GM12878 (cell line): ENCODE measurements at regions of chr4 and their contacts with region 1.

Region 1: GRCh38 chr4:41661442-41662076 is 87.0 kb downstream of the PHOX2B start:
- DNase-seq: no peak
- ATAC-seq: peak; percentile 84
- H3K4me3 ChIP-seq: no peak overlapping the region
- H3K27ac ChIP-seq: no peak overlapping the region
- H3K4me1 ChIP-seq: no peaks in the 10 kb centered on the region
- H3K27me3 ChIP-seq: peaks cover 0 to 2% of the 10 kb centered on the region in 2 experiments; a peak in 1 of 4 replicates
- CTCF ChIP-seq: peak; percentile 83 to 92 (median 89)
- EP300 ChIP-seq: no peak
- POLR2A ChIP-seq: no peak
- RAD21 ChIP-seq: peak; percentile 79

Region 2: GRCh38 chr4:40908702-40909362 is 752.7 kb before region 1 on chr4:
- CTCF ChIA-PET with region 1: interaction called, 5 read pairs
- POLR2A ChIA-PET with region 1: no interaction called
- RAD21 ChIA-PET with region 1: no interaction called
- SMC1A ChIA-PET with region 1: no interaction called
- in situ Hi-C with region 1: loop called (anchors 25 kb)
- intact Hi-C with region 1: no loop called
- DNase-seq: peak; percentile 40
- ATAC-seq: peak; percentile 99
- H3K4me3 ChIP-seq: no peak overlapping the region
- H3K27ac ChIP-seq: no peak overlapping the region
- H3K4me1 ChIP-seq: peaks cover 4% of the 10 kb centered on the region; the same call in 1 of the 2 replicates
- H3K27me3 ChIP-seq: no peaks in the 10 kb centered on the region
- CTCF ChIP-seq: peak; percentile 92 to 97 (median 93)
- EP300 ChIP-seq: no peak
- POLR2A ChIP-seq: no peak
- RAD21 ChIP-seq: peak; percentile 82

Region 3: DNA sequence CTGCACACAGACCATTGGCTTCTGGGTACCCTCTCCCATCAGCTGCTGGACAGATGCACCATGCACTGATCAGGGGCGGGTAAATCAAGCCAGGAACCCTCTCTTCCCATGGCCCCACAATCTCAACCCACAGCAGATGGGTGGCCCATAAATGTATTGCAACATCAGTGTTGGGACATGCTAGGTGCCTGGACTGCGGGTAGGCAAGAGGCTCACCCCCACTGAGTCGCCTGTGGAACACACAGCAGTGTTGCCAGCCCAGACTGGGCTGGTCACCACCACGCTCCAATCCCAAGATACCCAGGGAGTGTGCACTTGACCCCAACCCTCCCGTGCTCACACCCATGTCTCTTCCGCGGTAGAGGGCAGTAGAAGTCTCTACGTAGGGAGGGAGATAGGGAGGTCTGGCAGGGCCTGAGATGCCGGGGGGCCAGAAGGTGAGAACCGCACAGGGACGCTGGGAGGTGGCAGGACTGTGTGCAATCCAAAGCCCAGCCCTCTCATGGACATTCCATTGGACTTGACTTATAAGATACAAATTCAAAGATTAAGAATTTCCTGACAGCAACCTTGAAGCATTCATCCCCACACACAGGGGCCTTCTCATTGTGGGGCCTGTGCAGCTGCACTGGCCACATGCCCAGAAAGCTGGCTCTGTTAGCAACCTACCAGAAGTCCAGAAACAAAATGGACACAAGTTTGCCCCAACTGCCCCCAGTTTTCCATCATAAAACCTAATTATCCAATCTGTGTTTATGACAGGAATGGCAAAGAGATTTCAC is 728.1 kb before region 1 on chr4:
- CTCF ChIA-PET with region 1: no interaction called
- POLR2A ChIA-PET with region 1: no interaction called
- RAD21 ChIA-PET with region 1: no interaction called
- SMC1A ChIA-PET with region 1: no interaction called
- in situ Hi-C with region 1: no loop called
- intact Hi-C with region 1: loop called (anchors 10 kb)
- DNase-seq: no peak
- ATAC-seq: no peak
- H3K4me3 ChIP-seq: no peak overlapping the region
- H3K27ac ChIP-seq: no peak overlapping the region
- H3K4me1 ChIP-seq: no peaks in the 10 kb centered on the region
- H3K27me3 ChIP-seq: no peaks in the 10 kb centered on the region; a peak in 1 of 4 replicates
- CTCF ChIP-seq: no peak
- EP300 ChIP-seq: no peak
- POLR2A ChIP-seq: no peak
- RAD21 ChIP-seq: no peak

Region 4: DNA sequence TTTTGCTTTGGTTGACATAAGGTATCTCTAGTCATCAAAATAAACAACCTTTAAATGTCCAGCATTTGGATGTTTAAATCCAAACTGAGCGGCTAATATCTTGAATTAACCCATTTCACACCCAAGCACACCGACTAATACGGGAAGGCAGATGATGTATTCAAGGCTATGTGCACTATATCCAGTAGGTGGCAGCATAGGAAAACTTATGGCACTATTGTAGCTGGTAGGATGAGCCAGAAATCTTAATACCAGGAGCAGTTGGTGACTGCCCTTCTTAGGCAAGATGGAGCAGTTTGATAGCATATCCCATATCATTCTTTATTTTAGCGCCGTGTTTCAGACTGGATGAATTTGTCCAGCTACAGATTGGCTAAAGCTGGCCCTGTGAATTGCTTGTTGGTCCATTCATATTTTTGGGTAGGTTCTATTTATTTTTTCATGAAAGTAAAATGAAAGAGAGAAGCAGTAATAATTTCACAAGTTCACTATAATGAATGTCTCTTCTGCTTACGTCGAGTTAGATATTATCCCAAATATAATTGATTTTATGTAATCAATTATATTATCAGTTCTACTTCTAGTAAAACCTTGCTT is 380.4 kb before region 1 on chr4:
- CTCF ChIA-PET with region 1: interaction called, 126 read pairs
- POLR2A ChIA-PET with region 1: no interaction called
- RAD21 ChIA-PET with region 1: interaction called, 34 read pairs
- SMC1A ChIA-PET with region 1: interaction called, 67 read pairs
- in situ Hi-C with region 1: no loop called
- intact Hi-C with region 1: loop called (anchors 1 kb)
- DNase-seq: peak; percentile 48
- ATAC-seq: peak; percentile 99
- H3K4me3 ChIP-seq: no peak overlapping the region
- H3K27ac ChIP-seq: no peak overlapping the region
- H3K4me1 ChIP-seq: no peaks in the 10 kb centered on the region
- H3K27me3 ChIP-seq: no peaks in the 10 kb centered on the region
- CTCF ChIP-seq: peak; percentile 72 to 92 (median 90)
- EP300 ChIP-seq: no peak
- POLR2A ChIP-seq: no peak
- RAD21 ChIP-seq: peak; percentile 97

Region 5: DNA sequence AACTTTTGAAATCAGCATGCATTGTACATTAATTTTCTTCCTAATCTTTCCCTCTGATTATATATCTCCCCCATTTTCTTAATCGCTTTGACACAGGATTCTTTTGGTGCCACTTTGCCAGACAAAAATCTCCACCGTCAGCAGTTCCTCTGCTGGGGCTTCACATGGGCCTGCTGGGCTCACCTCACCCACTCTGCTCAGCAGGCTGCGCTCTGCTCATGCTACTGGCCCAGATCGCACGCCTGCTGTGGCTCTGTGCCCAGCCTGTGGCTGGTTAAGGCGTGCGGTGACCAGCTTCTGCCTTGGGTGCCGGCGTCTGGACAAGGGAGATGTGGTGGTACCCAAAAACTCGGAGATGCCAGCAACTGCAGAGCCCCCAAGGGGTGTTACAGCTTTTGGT is 373.7 kb before region 1 on chr4:
- CTCF ChIA-PET with region 1: interaction called, 126 read pairs
- POLR2A ChIA-PET with region 1: no interaction called
- RAD21 ChIA-PET with region 1: interaction called, 3 read pairs
- SMC1A ChIA-PET with region 1: interaction called, 5 read pairs
- in situ Hi-C with region 1: no loop called
- intact Hi-C with region 1: no loop called
- DNase-seq: no peak
- ATAC-seq: no peak
- H3K4me3 ChIP-seq: no peak overlapping the region
- H3K27ac ChIP-seq: no peak overlapping the region
- H3K4me1 ChIP-seq: no peaks in the 10 kb centered on the region
- H3K27me3 ChIP-seq: no peaks in the 10 kb centered on the region
- CTCF ChIP-seq: no peak
- EP300 ChIP-seq: no peak
- POLR2A ChIP-seq: no peak
- RAD21 ChIP-seq: no peak

Region 6: GRCh38 chr4:41644288-41644914 is 17.2 kb before region 1 on chr4:
- CTCF ChIA-PET with region 1: interaction called, 16 read pairs
- POLR2A ChIA-PET with region 1: no interaction called
- RAD21 ChIA-PET with region 1: no interaction called
- SMC1A ChIA-PET with region 1: interaction called, 5 read pairs
- in situ Hi-C with region 1: no loop called
- intact Hi-C with region 1: no loop called
- DNase-seq: no peak
- ATAC-seq: no peak
- H3K4me3 ChIP-seq: no peak overlapping the region
- H3K27ac ChIP-seq: no peak overlapping the region
- H3K4me1 ChIP-seq: no peaks in the 10 kb centered on the region
- H3K27me3 ChIP-seq: peaks cover 0 to 4% of the 10 kb centered on the region in 2 experiments; a peak in 1 of 4 replicates
- CTCF ChIP-seq: 0 out of 6 replicates have a peak, but pooled peaks of 2 of the 3 experiments have one; percentile 2 to 20
- EP300 ChIP-seq: no peak
- POLR2A ChIP-seq: no peak
- RAD21 ChIP-seq: no peak; the same call in 1 of the 2 replicates

Region 7: DNA sequence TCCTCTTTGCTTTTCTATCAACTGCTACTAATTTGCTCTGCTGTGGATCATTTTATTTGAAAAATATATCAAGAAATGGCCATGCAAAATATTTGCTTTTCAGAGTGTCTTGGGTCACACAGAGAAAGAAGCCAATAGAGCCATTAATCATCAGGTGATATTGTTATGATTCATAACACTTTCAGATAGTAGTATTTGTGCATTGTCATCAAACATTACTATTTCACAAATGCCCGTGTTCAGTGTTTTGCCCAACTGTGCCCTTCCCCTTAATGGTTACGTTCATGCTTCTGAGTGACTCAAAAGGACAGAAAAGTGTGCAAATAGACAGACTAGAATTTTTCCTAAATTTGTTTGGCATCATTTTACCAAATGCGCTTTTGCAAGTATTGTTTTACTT is 40.4 kb after region 1 on chr4:
- CTCF ChIA-PET with region 1: no interaction called
- POLR2A ChIA-PET with region 1: no interaction called
- RAD21 ChIA-PET with region 1: no interaction called
- SMC1A ChIA-PET with region 1: no interaction called
- in situ Hi-C with region 1: no loop called
- intact Hi-C with region 1: no loop called
- DNase-seq: no peak
- ATAC-seq: no peak
- H3K4me3 ChIP-seq: no peak overlapping the region
- H3K27ac ChIP-seq: no peak overlapping the region
- H3K4me1 ChIP-seq: no peaks in the 10 kb centered on the region
- H3K27me3 ChIP-seq: 0 out of 4 replicates have a peak, but pooled peaks cover 0 to 1% of the 10 kb centered on the region in 2 experiments
- CTCF ChIP-seq: no peak
- EP300 ChIP-seq: no peak
- POLR2A ChIP-seq: no peak
- RAD21 ChIP-seq: no peak